Heart left ventricle (tissue), 16 donors: ENCODE measurements at regions of chr15 and their contacts with region 1.

Region 1: DNA sequence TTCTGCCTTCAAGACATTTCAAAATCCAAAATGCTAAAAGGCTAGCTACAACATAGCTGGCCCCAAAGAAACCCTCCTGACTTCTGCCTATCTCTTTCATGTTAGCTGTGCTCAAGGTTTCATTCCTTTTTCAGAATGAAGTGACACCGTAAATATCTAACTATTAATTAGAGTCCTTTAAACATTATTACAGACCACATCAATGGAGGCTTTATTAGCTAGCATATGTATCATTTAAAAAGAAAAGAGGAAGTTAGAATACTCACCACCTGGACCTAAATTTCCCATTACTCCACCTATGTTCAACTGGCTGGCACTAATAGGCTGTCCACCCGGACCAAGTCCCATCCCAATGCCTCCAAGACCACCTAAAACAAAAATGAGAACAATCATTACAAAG is 24.6 kb downstream of the MYEF2 start:
- DNase-seq: no peak
- ATAC-seq: no peak
- H3K4me3 ChIP-seq: no peak overlapping the region
- H3K27ac ChIP-seq: no peak overlapping the region
- H3K4me1 ChIP-seq: no peaks in the 10 kb centered on the region
- H3K27me3 ChIP-seq: no peaks in the 10 kb centered on the region
- CTCF ChIP-seq: no peak
- POLR2A ChIP-seq: no peak

Region 2: GRCh38 chr15:48131324-48131723 is 22.2 kb before region 1 on chr15:
- intact Hi-C with region 1: loop called in 1 of 10 experiments (anchors 2 kb)
- DNase-seq: no peak
- ATAC-seq: no peak
- H3K4me3 ChIP-seq: no peak overlapping the region
- H3K27ac ChIP-seq: no peak overlapping the region
- H3K4me1 ChIP-seq: no peaks in the 10 kb centered on the region
- H3K27me3 ChIP-seq: no peaks in the 10 kb centered on the region
- CTCF ChIP-seq: no peak
- POLR2A ChIP-seq: no peak